BJ (cell line): ENCODE measurements at regions of chr15 and their contacts with region 1.

Region 1: DNA sequence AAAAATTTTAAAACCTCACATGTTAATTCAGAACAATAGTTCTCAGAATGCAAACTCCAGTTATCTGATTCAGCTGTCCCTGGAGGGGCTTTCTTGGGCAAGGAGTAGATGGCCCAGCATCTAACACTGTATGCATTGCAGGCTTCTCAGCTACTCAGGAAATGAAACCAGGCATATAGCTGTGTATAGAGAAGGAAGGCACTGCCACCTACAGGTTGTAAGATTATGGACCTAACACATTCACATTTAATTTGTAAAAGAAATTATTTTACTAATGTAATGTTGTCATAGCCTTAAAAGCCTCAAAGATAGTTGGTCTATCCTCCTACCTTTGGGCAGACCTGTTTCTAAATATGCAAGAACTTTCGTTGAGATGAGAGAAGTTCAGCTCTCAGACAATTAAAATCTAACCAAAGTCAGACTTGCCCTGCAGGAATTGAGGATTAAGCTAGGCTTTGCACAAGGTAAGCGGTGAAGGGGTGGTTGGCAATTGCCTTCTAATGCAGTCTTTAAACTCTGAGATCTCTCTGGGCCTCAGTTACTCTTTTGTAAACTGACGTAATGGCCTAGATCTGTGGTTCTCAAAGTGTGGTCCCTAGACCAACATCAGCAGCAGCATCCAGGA is 132.8 kb upstream of the SLC24A5 start:
- DNase-seq: no peak
- H3K4me3 ChIP-seq: no peak overlapping the region
- H3K27me3 ChIP-seq: no peaks in the 10 kb centered on the region
- CTCF ChIP-seq: peak; percentile 65

Region 2: GRCh38 chr15:47184003-47184907 is 803.8 kb before region 1 on chr15:
- CTCF ChIA-PET with region 1: interaction called, 17 read pairs
- POLR2A ChIA-PET with region 1: no interaction called
- DNase-seq: no peak
- H3K4me3 ChIP-seq: peak overlapping the region; percentile 28
- H3K27me3 ChIP-seq: peaks cover 13% of the 10 kb centered on the region
- CTCF ChIP-seq: no peak

Region 3: GRCh38 chr15:47196057-47196456 is 792.0 kb before region 1 on chr15:
- CTCF ChIA-PET with region 1: interaction called, 75 read pairs
- POLR2A ChIA-PET with region 1: no interaction called
- DNase-seq: peak; percentile 11
- H3K4me3 ChIP-seq: no peak overlapping the region
- H3K27me3 ChIP-seq: no peaks in the 10 kb centered on the region
- CTCF ChIP-seq: peak; percentile 84

Region 4: DNA sequence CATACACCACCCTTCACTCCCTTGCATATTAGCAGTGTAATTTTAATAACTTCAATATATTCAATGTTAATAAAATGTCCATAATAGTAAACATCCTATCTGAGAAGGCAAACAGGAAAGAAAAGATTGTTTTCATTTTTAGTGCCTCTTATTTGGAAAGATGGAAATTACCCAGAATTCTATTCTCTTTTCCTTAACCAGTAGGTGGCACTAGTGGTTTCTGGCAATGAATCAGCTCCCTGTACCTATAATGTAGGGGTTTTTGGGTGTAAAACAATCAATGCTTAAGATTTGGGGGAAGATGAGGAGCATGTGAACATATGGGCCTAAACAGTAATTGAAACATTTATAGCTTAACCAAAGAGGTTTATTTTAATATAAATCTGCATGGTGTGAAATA is 276.4 kb before region 1 on chr15:
- CTCF ChIA-PET with region 1: interaction called, 11 read pairs
- POLR2A ChIA-PET with region 1: no interaction called
- DNase-seq: no peak
- H3K4me3 ChIP-seq: no peak overlapping the region
- H3K27me3 ChIP-seq: peaks cover 6% of the 10 kb centered on the region
- CTCF ChIP-seq: peak; percentile 61

Region 5: GRCh38 chr15:47742334-47742733 is 245.7 kb before region 1 on chr15:
- CTCF ChIA-PET with region 1: no interaction called
- POLR2A ChIA-PET with region 1: no interaction called
- DNase-seq: no peak
- H3K4me3 ChIP-seq: no peak overlapping the region
- H3K27me3 ChIP-seq: no peaks in the 10 kb centered on the region
- CTCF ChIP-seq: no peak

Region 6: DNA sequence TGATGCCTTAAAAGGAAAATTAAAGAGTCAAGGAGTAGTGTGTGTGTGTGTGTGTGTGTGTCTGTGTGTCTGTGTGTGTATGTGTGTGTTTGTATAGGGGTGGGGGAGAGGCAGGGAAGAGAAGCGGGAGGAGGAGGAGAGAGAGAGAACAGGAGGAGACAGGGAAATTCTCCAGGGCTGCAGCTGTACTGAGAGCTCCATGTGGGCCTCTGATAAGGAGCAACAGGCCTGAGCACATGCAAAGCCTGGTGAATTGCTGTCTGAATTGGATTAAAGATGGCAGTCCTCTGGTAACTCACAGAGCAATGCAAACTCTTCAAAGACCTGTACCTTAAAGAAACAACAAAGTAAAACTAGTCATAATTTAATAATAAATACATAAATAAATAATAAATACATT is 200.1 kb before region 1 on chr15:
- CTCF ChIA-PET with region 1: no interaction called
- POLR2A ChIA-PET with region 1: no interaction called
- DNase-seq: no peak
- H3K4me3 ChIP-seq: no peak overlapping the region
- H3K27me3 ChIP-seq: no peaks in the 10 kb centered on the region
- CTCF ChIP-seq: no peak

Region 7: GRCh38 chr15:47975427-47975826 is 12.6 kb before region 1 on chr15:
- CTCF ChIA-PET with region 1: interaction called, 10 read pairs
- POLR2A ChIA-PET with region 1: no interaction called
- DNase-seq: no peak
- H3K4me3 ChIP-seq: no peak overlapping the region
- H3K27me3 ChIP-seq: no peaks in the 10 kb centered on the region
- CTCF ChIP-seq: no peak